ENCODE measurements at regions of chr6 and their contacts with region 1.

Region 1: GRCh38 chr6:88870717-88871330 is 92.6 kb downstream of the RNGTT start:
- DNase-seq: no peak
- ATAC-seq: peak; percentile 42
- H3K4me3 Mint-ChIP-seq: no peak overlapping the region
- H3K27ac Mint-ChIP-seq: no peak overlapping the region
- H3K4me1 Mint-ChIP-seq: peaks cover 10% of the 10 kb centered on the region
- H3K27me3 Mint-ChIP-seq: no peaks in the 10 kb centered on the region
- CTCF ChIP-seq: no peak

Region 2: GRCh38 chr6:87393022-87393622 is 1477.7 kb before region 1 on chr6:
- CTCF ChIA-PET with region 1: interaction called, 28 read pairs
- POLR2A ChIA-PET with region 1: no interaction called
- intact Hi-C with region 1: loop called (anchors 1 kb)
- DNase-seq: no peak
- ATAC-seq: peak; percentile 94
- H3K4me3 Mint-ChIP-seq: no peak overlapping the region
- H3K27ac Mint-ChIP-seq: no peak overlapping the region
- H3K4me1 Mint-ChIP-seq: peaks cover 5% of the 10 kb centered on the region
- H3K27me3 Mint-ChIP-seq: no peaks in the 10 kb centered on the region
- CTCF ChIP-seq: peak; percentile 53

Region 3: DNA sequence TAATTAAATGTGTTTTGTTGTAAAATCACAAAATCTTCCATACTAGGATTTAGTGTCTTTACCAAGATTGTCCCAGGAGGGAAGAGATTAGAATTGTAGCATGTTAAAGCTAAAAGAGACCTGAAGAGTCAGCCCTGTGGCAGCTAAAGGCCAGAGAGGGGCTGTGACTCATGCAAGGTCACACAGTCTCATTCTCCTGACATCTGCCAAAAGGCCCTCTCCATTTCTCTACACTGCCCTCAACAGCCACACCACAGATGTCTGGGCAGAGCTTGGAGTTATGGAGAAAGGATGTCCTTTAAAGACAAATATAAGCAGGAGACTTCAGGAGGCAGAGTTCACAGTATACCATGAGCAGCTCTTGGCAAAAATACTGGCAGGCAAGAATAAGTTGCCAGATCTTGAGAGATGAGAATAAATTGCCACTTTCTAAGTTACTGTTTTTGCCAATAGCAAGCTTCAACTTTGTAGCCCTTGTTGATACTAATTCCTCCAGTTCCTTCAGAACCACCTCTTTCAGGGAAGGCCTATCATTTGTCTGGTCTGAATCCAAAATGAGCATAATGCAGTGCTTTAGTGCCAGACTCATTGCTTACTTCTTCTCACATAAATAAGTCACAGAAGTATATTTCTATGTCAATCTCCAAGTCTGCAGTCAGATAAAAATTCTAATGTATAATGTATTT is 1210.5 kb before region 1 on chr6:
- CTCF ChIA-PET with region 1: no interaction called
- POLR2A ChIA-PET with region 1: no interaction called
- intact Hi-C with region 1: loop called (anchors 10 kb)
- DNase-seq: no peak
- ATAC-seq: no peak
- H3K4me3 Mint-ChIP-seq: no peak overlapping the region
- H3K27ac Mint-ChIP-seq: no peak overlapping the region
- H3K4me1 Mint-ChIP-seq: peaks cover 13% of the 10 kb centered on the region
- H3K27me3 Mint-ChIP-seq: no peaks in the 10 kb centered on the region
- CTCF ChIP-seq: no peak

Region 4: GRCh38 chr6:88952065-88952973 is 81.5 kb after region 1 on chr6:
- CTCF ChIA-PET with region 1: no interaction called
- POLR2A ChIA-PET with region 1: no interaction called
- intact Hi-C with region 1: no loop called
- DNase-seq: no peak
- ATAC-seq: no peak
- H3K4me3 Mint-ChIP-seq: no peak overlapping the region
- H3K27ac Mint-ChIP-seq: no peak overlapping the region
- H3K4me1 Mint-ChIP-seq: peaks cover 14% of the 10 kb centered on the region
- H3K27me3 Mint-ChIP-seq: no peaks in the 10 kb centered on the region
- CTCF ChIP-seq: no peak

Measured in activated B cell treated with CpG ODN at 0.5 μM for 24 hours (primary cell).